ENCODE measurements at regions of chr1 and their contacts with region 1.

Region 1: GRCh38 chr1:234188454-234188792 is 184.8 kb upstream of the COA6 start:
- DNase-seq: peak; percentile 76
- ATAC-seq: peak; percentile 93
- H3K4me3 Mint-ChIP-seq: no peak overlapping the region
- H3K27ac Mint-ChIP-seq: peak overlapping the region; percentile 67
- H3K4me1 Mint-ChIP-seq: peaks cover 8% of the 10 kb centered on the region
- H3K27me3 Mint-ChIP-seq: peaks cover 11% of the 10 kb centered on the region
- CTCF ChIP-seq: no peak; the same call in 1 of the 2 replicates

Region 2: DNA sequence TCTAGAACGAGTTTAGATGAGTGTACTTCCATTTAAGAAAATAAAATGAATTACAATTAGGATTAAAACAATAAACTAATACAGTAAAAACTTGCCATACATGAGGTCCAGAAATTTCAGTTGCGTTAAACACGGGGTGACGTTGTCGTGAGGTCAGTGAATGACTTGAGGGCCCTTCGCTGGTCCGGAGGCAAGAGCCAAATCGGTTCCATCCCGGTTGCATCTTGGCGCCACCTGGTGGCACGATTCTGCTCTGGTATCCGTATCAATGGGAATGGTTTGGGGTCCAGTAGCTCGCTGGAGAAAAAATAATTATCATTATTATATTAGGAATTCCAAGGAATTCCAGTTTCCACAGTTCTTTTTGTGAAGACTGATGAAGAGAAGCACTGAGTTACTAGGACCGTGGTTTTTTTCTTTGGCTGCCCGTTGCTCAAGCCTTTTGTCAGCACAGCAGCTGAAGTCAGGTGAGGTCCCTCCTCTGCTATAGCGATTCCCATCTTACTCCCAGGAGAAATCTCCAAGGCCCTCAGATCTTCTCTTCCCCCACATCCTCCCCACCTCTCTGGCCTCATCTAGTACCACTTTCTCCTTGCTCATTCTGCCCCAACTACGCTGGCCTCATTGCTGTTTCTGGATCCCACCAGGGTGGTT is 122.5 kb before region 1 on chr1:
- CTCF ChIA-PET with region 1: no interaction called
- POLR2A ChIA-PET with region 1: no interaction called
- DNase-seq: peak; percentile 90
- ATAC-seq: peak; percentile 91
- H3K4me3 Mint-ChIP-seq: no peak overlapping the region
- H3K27ac Mint-ChIP-seq: no peak overlapping the region
- H3K4me1 Mint-ChIP-seq: no peaks in the 10 kb centered on the region
- H3K27me3 Mint-ChIP-seq: no peaks in the 10 kb centered on the region; the same call in 1 of the 2 replicates
- CTCF ChIP-seq: peak; percentile 72

Region 3: GRCh38 chr1:234125283-234125682 is 63.1 kb before region 1 on chr1:
- CTCF ChIA-PET with region 1: interaction called, 30 read pairs
- POLR2A ChIA-PET with region 1: no interaction called
- DNase-seq: peak; percentile 90
- ATAC-seq: peak; percentile 100
- H3K4me3 Mint-ChIP-seq: peak overlapping the region; percentile 10; the same call in 1 of the 2 replicates
- H3K27ac Mint-ChIP-seq: no peak overlapping the region
- H3K4me1 Mint-ChIP-seq: peaks cover 7% of the 10 kb centered on the region
- H3K27me3 Mint-ChIP-seq: peaks cover 6% of the 10 kb centered on the region
- CTCF ChIP-seq: peak; percentile 58

Region 4: DNA sequence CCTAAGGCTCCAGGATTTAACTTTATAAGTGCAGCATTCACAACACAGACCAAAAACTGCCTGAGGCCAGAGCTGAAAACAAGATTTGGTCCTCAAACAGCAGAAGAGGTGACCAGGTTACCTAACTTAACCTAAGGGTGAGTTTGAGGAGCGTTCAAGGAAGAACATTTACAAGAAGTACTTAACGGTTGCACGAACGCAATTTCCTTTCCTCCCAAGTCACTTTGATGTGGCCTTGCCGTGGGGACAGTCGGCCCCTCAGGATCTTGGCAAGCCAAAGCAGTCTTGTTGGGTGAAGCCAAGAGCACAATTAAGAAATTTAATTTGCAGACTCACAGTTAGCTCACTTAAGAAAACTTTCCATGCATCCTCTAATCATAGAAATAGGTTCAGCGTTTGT is 17.8 kb before region 1 on chr1:
- CTCF ChIA-PET with region 1: interaction called, 15 read pairs
- POLR2A ChIA-PET with region 1: no interaction called
- DNase-seq: no peak
- ATAC-seq: no peak
- H3K4me3 Mint-ChIP-seq: no peak overlapping the region
- H3K27ac Mint-ChIP-seq: no peak overlapping the region
- H3K4me1 Mint-ChIP-seq: 0 out of 2 replicates have a peak, but pooled peaks cover 2% of the 10 kb centered on the region
- H3K27me3 Mint-ChIP-seq: no peaks in the 10 kb centered on the region
- CTCF ChIP-seq: no peak

Region 5: DNA sequence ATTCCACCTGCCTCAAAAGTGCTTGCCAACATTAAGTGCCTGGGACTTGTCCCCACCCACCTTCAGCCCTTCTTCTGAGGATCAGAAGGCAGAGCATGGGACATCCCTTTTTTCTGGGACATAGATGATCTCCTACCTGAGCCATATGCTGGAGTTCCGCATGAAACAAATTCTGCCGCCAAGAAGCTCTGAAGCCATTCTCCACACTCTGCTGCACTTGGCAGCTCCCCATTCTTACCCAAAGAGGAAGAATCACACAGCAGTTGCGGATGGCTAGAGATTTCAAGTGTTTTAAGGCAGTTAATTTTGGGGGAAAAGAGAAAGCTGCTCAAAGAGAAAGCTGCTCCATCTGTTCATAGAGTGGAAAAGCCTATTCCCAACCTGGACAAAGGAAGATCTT is 12.4 kb before region 1 on chr1:
- CTCF ChIA-PET with region 1: interaction called, 15 read pairs
- POLR2A ChIA-PET with region 1: no interaction called
- DNase-seq: no peak
- ATAC-seq: no peak
- H3K4me3 Mint-ChIP-seq: no peak overlapping the region
- H3K27ac Mint-ChIP-seq: no peak overlapping the region
- H3K4me1 Mint-ChIP-seq: 0 out of 2 replicates have a peak, but pooled peaks cover 2% of the 10 kb centered on the region
- H3K27me3 Mint-ChIP-seq: peaks cover 3% of the 10 kb centered on the region
- CTCF ChIP-seq: no peak